Activated CD4-positive, alpha-beta T cell treated with anti-CD3 and anti-CD28 coated beads, Interleukin-2, amount 10 ng/mL, durations not matched to agents 24 days and 14 days (primary cell): ENCODE measurements at regions of chr7 and their contacts with region 1.

Region 1: GRCh38 chr7:27196287-27196767 is 3.6 kb downstream of the HOXA13 start:
- DNase-seq: peak; percentile 93
- H3K4me3 Mint-ChIP-seq: no peak overlapping the region
- H3K27ac Mint-ChIP-seq: no peak overlapping the region
- H3K4me1 Mint-ChIP-seq: peaks cover 6% of the 10 kb centered on the region
- H3K27me3 Mint-ChIP-seq: peaks cover 75% of the 10 kb centered on the region

Region 2: GRCh38 chr7:26224359-26224758 is 972.0 kb before region 1 on chr7:
- intact Hi-C with region 1: no loop called
- DNase-seq: no peak
- H3K4me3 Mint-ChIP-seq: no peak overlapping the region
- H3K27ac Mint-ChIP-seq: no peak overlapping the region
- H3K4me1 Mint-ChIP-seq: no peaks in the 10 kb centered on the region
- H3K27me3 Mint-ChIP-seq: peaks cover 31% of the 10 kb centered on the region

Region 3: GRCh38 chr7:27160546-27161213 is 35.6 kb before region 1 on chr7:
- intact Hi-C with region 1: loop called (anchors 2 kb)
- DNase-seq: peak; percentile 93
- H3K4me3 Mint-ChIP-seq: peak overlapping the region; percentile 72
- H3K27ac Mint-ChIP-seq: no peak overlapping the region
- H3K4me1 Mint-ChIP-seq: peaks cover 4% of the 10 kb centered on the region
- H3K27me3 Mint-ChIP-seq: peaks cover 74% of the 10 kb centered on the region

Region 4: GRCh38 chr7:27184337-27185012 is 11.9 kb before region 1 on chr7:
- intact Hi-C with region 1: loop called (anchors 2 kb)
- DNase-seq: peak; percentile 69
- H3K4me3 Mint-ChIP-seq: peak overlapping the region; percentile 56
- H3K27ac Mint-ChIP-seq: peak overlapping the region; percentile 78
- H3K4me1 Mint-ChIP-seq: peaks cover 18% of the 10 kb centered on the region
- H3K27me3 Mint-ChIP-seq: peaks cover 78% of the 10 kb centered on the region

Region 5: GRCh38 chr7:27576360-27576944 is 380.1 kb after region 1 on chr7:
- intact Hi-C with region 1: loop called (anchors 1 kb)
- DNase-seq: no peak
- H3K4me3 Mint-ChIP-seq: no peak overlapping the region
- H3K27ac Mint-ChIP-seq: no peak overlapping the region
- H3K4me1 Mint-ChIP-seq: no peaks in the 10 kb centered on the region
- H3K27me3 Mint-ChIP-seq: peaks cover 2% of the 10 kb centered on the region

Region 6: GRCh38 chr7:27921081-27921836 is 724.9 kb after region 1 on chr7:
- intact Hi-C with region 1: loop called (anchors 1 kb)
- DNase-seq: peak; percentile 78
- H3K4me3 Mint-ChIP-seq: no peak overlapping the region
- H3K27ac Mint-ChIP-seq: no peak overlapping the region
- H3K4me1 Mint-ChIP-seq: peaks cover 4% of the 10 kb centered on the region
- H3K27me3 Mint-ChIP-seq: no peaks in the 10 kb centered on the region

Region 7: DNA sequence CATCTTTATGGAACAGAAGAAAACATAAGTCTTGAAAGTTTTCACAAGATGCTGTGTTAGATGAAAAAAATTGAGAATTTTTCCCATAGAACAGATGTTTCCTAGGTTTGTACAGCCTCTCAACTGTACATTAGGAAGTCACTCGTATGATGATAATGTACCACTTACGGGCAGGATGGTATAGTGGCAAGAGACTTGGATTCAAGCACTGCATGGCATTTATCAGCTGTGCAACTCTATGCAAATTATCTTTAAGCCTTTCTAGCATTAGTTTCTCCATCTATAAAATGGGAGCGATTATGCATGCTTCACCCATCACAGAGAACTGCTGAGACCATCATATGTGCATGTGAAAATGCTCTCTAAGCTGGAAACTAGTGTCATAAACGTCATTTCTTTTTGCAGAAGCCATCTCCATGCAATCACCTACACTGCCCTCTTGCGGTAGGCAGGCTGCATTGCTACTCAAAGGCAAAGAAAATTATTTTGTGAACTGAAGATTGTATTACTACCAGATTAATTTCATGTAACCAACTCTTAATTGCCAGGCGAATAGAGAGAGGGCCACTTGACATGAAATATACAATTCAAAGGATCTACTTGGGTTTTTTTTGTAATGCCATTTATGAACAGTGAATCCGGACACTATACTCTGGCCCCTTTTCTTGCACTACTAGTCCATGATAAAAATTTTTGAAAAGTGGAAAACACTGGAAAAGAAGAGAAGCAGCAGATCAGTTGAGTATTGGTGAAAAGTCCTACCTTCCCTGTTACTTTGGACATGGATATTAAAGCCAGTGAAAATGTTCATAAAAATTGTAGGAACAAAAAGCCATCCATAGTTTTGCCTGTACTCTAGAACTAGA is 881.9 kb after region 1 on chr7:
- intact Hi-C with region 1: loop called (anchors 2 kb)
- DNase-seq: peak; percentile 81
- H3K4me3 Mint-ChIP-seq: no peak overlapping the region
- H3K27ac Mint-ChIP-seq: no peak overlapping the region
- H3K4me1 Mint-ChIP-seq: no peaks in the 10 kb centered on the region
- H3K27me3 Mint-ChIP-seq: peaks cover 7% of the 10 kb centered on the region